ENCODE measurements at regions of chr2 and their contacts with region 1.

Region 1: GRCh38 chr2:43226558-43226954 is at the start of gene ZFP36L2:
- DNase-seq: peak; percentile 96 to 98
- ATAC-seq: peak; percentile 77 to 92 (median 82)
- H3K4me3 ChIP-seq: peak within 1 kb of the TSS; percentile 72 to 97 (median 90)
- H3K27ac ChIP-seq: peak within 1 kb of the TSS; percentile 96 to 100 (median 99)
- H3K4me1 ChIP-seq: peaks cover 0 to 61% (median 47%) of the 10 kb centered on the region in 9 donors
- H3K27me3 ChIP-seq: no peaks in the 10 kb centered on the region
- CTCF ChIP-seq: peak in 2 of 9 donors; percentile 13 to 17
- total RNA-seq, gene ZFP36L2: 34.4 to 69.6 (median 42.3) TPM

Region 2: GRCh38 chr2:42859006-42859552 is 367.5 kb before region 1 on chr2:
- intact Hi-C with region 1: loop called in 4 of 10 experiments (anchors 5 to 10 kb)
- DNase-seq: peak in 1 of 2 donors; percentile 81
- ATAC-seq: peak in 2 of 8 donors; percentile 30 to 38
- H3K4me3 ChIP-seq: no peak overlapping the region
- H3K27ac ChIP-seq: peak overlapping the region in 6 of 10 donors; percentile 3 to 76 (median 44)
- H3K4me1 ChIP-seq: peaks cover 2 to 30% (median 17%) of the 10 kb centered on the region in 9 donors
- H3K27me3 ChIP-seq: no peaks in the 10 kb centered on the region
- CTCF ChIP-seq: peak; percentile 80 to 93 (median 88)

Region 3: DNA sequence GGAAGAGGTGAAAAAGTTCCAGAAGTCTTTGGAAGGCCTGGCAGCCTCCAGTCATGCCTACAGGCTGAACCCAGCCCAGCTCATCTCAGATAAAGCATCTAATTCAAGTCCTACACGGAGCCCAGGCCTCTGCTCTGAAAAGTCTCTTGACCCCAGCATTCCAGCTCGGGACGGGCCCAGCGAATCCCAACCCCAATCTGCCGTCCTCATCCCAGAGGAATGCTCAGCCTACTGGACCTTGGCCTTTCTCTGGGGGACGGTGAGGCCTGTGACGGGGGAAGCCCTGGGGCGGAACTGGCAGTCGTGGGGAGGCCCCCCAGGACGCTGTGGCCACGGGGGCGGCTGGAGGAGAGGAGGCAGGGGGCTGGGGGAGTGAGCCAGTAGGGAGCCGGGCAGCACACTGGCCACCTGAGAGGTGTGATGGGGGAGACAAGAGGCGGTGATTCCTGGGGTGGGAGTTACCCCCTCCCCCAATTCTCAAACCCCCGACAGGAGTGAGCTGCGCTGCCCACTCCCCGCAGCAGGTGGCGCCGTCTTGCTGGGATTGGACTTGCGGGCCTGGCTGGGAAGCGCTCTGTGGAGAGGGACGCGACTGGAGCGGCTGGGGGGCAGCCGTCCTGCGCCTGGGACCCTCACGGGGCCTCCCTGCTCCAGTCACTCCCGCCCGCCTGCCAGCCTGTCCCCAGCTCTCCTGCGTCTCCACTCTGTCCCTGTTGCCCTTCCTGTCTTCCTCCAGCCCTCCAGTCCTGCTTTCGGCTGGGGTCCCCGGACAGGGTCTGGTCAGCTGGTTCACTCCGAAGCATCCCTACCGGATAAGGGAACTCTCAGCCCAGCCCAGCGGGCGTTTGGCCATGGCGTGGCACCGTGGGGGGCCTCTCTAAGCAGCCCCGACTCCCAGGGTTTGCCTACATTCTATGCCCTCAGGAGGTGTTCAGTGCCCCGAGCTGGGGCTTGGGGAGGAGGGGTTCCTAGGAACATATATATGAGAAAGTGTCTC is 251.5 kb before region 1 on chr2:
- intact Hi-C with region 1: loop called (anchors 1 to 10 kb)
- DNase-seq: peak; percentile 79 to 85
- ATAC-seq: peak; percentile 85 to 92 (median 88)
- H3K4me3 ChIP-seq: peak overlapping the region in 9 of 10 donors; percentile 16 to 61 (median 52)
- H3K27ac ChIP-seq: peak overlapping the region in 6 of 10 donors; percentile 59 to 81 (median 72)
- H3K4me1 ChIP-seq: peaks cover 12 to 32% (median 19%) of the 10 kb centered on the region in 9 donors
- H3K27me3 ChIP-seq: no peaks in the 10 kb centered on the region
- CTCF ChIP-seq: peak; percentile 86 to 97 (median 89)

Region 4: DNA sequence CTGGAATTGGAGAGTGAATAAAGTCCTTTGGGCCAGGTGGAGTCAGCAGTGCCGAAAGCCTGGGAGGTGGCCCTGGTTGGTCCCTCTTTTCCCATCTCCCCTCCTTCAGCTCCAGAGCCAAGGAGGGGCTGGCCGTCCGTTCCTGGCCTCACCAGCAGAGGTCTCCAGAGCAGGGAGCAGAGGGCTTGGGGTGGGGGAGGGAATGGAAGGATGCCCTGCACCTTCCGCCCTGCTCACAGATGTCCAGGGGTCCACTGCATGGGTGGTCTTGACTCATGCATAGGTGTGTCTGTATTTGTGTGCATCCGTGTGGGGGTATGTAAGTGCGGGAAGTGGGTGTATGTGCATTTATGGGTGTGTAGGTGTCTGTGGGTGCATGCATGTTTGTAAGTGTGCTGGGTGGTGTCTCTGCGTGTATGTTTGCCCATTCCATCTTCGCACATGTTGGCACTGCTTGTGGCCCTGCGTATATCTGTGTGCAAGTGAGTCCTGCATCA is 202.0 kb before region 1 on chr2:
- intact Hi-C with region 1: loop called (anchors 2 to 5 kb)
- DNase-seq: peak; percentile 77 to 78
- ATAC-seq: peak; percentile 45 to 80 (median 74)
- H3K4me3 ChIP-seq: no peak overlapping the region
- H3K27ac ChIP-seq: peak overlapping the region in 3 of 10 donors; percentile 9 to 31 (median 22)
- H3K4me1 ChIP-seq: peaks cover 7 to 43% (median 27%) of the 10 kb centered on the region in 9 donors
- H3K27me3 ChIP-seq: no peaks in the 10 kb centered on the region
- CTCF ChIP-seq: peak; percentile 58 to 88 (median 85)

Region 5: GRCh38 chr2:43086451-43087221 is 139.9 kb before region 1 on chr2:
- intact Hi-C with region 1: loop called in 3 of 10 experiments (anchors 1 to 10 kb)
- DNase-seq: peak; percentile 51 to 88
- ATAC-seq: peak; percentile 75 to 89 (median 84)
- H3K4me3 ChIP-seq: no peak overlapping the region
- H3K27ac ChIP-seq: peak overlapping the region; percentile 76 to 93 (median 90)
- H3K4me1 ChIP-seq: peaks cover 48 to 67% (median 61%) of the 10 kb centered on the region in 9 donors
- H3K27me3 ChIP-seq: no peaks in the 10 kb centered on the region
- CTCF ChIP-seq: no peak

Region 6: DNA sequence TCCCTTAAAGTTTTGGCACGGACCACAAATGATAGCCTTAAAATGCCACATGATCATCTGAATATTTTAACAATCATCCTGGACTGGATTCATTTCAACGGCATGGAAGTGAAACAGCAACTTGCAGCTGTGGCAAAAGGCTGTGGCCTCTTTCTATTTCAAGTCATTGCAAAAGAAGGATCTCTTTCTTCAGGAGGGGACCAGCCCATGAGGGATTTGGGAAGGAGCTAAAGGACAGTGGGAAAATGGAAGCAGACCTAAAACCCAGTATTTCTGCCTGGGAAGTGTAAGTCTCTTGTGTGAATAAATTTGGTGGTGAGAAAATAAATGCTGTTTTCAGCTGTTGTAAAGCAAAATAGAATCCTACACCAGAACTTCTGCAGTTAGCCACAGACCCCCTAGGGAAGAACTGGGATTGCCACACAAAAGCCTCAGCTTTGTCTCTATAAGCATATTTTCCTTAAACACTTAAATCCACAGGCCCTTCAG is 107.1 kb after region 1 on chr2:
- intact Hi-C with region 1: loop called in 3 of 10 experiments (anchors 5 to 10 kb)
- DNase-seq: peak in 1 of 2 donors; percentile 64
- ATAC-seq: peak; percentile 28 to 74 (median 67)
- H3K4me3 ChIP-seq: peak overlapping the region in 3 of 10 donors; percentile 19 to 23 (median 23)
- H3K27ac ChIP-seq: peak overlapping the region; percentile 57 to 90 (median 86)
- H3K4me1 ChIP-seq: peaks cover 13 to 72% (median 55%) of the 10 kb centered on the region in 9 donors
- H3K27me3 ChIP-seq: no peaks in the 10 kb centered on the region
- CTCF ChIP-seq: no peak

Region 7: GRCh38 chr2:43387092-43388062 is 160.8 kb after region 1 on chr2:
- intact Hi-C with region 1: no loop called
- DNase-seq: no peak
- ATAC-seq: peak in 1 of 8 donors; percentile 35
- H3K4me3 ChIP-seq: no peak overlapping the region
- H3K27ac ChIP-seq: peak overlapping the region in 1 of 10 donors; percentile 27
- H3K4me1 ChIP-seq: peaks cover 0 to 31% (median 17%) of the 10 kb centered on the region in 9 donors
- H3K27me3 ChIP-seq: no peaks in the 10 kb centered on the region
- CTCF ChIP-seq: no peak

Region 8: GRCh38 chr2:43542285-43542937 is 315.9 kb after region 1 on chr2:
- intact Hi-C with region 1: loop called in 3 of 10 experiments (anchors 5 to 10 kb)
- DNase-seq: no peak
- ATAC-seq: peak in 3 of 8 donors; percentile 28 to 53 (median 46)
- H3K4me3 ChIP-seq: no peak overlapping the region
- H3K27ac ChIP-seq: no peak overlapping the region
- H3K4me1 ChIP-seq: peaks cover 0 to 42% (median 0%) of the 10 kb centered on the region in 9 donors
- H3K27me3 ChIP-seq: no peaks in the 10 kb centered on the region
- CTCF ChIP-seq: peak in 8 of 9 donors; percentile 52 to 80 (median 70)